ENCODE measurements at regions of chr3 and their contacts with region 1.

Region 1: DNA sequence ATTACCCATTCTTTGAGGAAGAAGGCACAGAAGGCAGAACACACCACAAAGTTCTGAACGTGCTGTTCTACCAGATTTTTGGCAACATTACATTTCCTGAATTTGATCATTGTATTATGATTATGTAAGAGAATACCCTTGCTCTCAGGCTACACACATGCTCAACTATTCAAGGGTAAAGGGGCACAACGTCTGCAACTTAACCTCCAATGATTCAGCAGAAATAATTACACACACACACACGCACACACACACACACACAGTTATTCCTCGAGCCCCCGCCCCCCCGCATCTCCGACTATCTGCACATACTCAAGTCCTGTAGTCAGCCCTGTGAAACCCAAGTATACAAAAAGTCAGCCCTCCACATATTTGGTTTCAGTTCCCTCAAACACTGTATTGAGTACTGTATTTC is 26.8 kb downstream of the RPN1 start:
- DNase-seq: no peak
- ATAC-seq: no peak
- H3K4me3 Mint-ChIP-seq: no peak overlapping the region
- H3K27ac Mint-ChIP-seq: peak overlapping the region; percentile 65
- H3K4me1 Mint-ChIP-seq: peaks cover 24% of the 10 kb centered on the region
- H3K27me3 Mint-ChIP-seq: no peaks in the 10 kb centered on the region

Region 2: GRCh38 chr3:128217702-128218547 is 405.8 kb before region 1 on chr3:
- CTCF ChIA-PET with region 1: no interaction called
- POLR2A ChIA-PET with region 1: no interaction called
- intact Hi-C with region 1: no loop called
- DNase-seq: no peak
- ATAC-seq: peak; percentile 16
- H3K4me3 Mint-ChIP-seq: no peak overlapping the region
- H3K27ac Mint-ChIP-seq: peak overlapping the region; percentile 39
- H3K4me1 Mint-ChIP-seq: peaks cover 5% of the 10 kb centered on the region
- H3K27me3 Mint-ChIP-seq: no peaks in the 10 kb centered on the region

Region 3: GRCh38 chr3:128532012-128532983 is 91.5 kb before region 1 on chr3:
- CTCF ChIA-PET with region 1: no interaction called
- POLR2A ChIA-PET with region 1: no interaction called
- intact Hi-C with region 1: no loop called
- DNase-seq: no peak
- ATAC-seq: no peak
- H3K4me3 Mint-ChIP-seq: no peak overlapping the region
- H3K27ac Mint-ChIP-seq: no peak overlapping the region
- H3K4me1 Mint-ChIP-seq: no peaks in the 10 kb centered on the region
- H3K27me3 Mint-ChIP-seq: peaks cover 29% of the 10 kb centered on the region

Region 4: DNA sequence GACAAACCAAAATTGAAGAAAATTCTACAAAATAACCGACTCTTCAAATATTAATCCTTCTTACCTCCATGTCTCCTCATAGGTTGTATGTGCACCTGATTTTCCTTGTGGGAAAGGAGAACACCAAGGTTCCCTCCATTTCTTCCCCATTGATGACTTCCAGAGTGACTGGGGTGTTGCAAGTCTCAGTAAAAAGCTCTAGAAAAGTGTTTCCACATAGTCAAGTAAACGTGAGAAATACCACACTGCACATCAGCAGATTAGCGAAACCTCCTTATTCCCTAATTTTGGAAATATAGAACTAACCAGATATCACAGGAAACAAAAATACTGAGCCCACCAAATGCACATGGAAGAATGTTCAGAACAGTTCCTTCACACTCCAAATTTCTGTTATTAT is 31.8 kb after region 1 on chr3:
- CTCF ChIA-PET with region 1: interaction called, 3 read pairs
- POLR2A ChIA-PET with region 1: interaction called, 4 read pairs
- intact Hi-C with region 1: loop called in 1 of 2 experiments (anchors 1 kb)
- DNase-seq: no peak
- ATAC-seq: no peak
- H3K4me3 Mint-ChIP-seq: no peak overlapping the region
- H3K27ac Mint-ChIP-seq: peak overlapping the region; percentile 6
- H3K4me1 Mint-ChIP-seq: peaks cover 9% of the 10 kb centered on the region
- H3K27me3 Mint-ChIP-seq: no peaks in the 10 kb centered on the region

Measured in activated CD4-positive, alpha-beta T cell treated with anti-CD3 and anti-CD28 coated beads for 36 hours (primary cell).